ENCODE measurements at regions of chr5 and their contacts with region 1.

Region 1: DNA sequence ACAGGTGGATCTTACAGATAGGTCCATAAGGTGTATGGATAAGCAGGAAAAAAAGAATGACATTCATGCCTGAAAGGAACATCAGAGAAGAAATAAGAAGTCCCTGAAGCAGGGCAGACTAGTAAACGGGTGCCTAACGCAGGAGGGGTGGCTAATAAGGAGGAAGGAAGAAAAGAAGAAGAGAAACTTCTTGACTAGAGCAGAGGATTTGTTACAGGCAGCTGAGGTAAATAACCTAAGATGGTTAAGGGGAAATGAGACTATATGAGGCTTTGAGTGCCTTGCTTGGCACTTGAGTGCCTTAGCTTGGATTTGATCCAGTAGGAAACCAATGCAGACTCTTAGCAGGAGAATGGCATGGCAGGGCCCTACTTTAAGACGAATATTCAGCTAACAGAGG is 313.5 kb upstream of the PDE4D start:
- DNase-seq: no peak
- ATAC-seq: no peak
- H3K4me3 ChIP-seq: no peak overlapping the region
- H3K27ac ChIP-seq: peak overlapping the region; percentile 2
- H3K4me1 ChIP-seq: peaks cover 34% of the 10 kb centered on the region
- H3K27me3 ChIP-seq: no peaks in the 10 kb centered on the region
- CTCF ChIP-seq: no peak
- EP300 ChIP-seq: no peak
- POLR2A ChIP-seq: no peak
- RAD21 ChIP-seq: no peak

Region 2: DNA sequence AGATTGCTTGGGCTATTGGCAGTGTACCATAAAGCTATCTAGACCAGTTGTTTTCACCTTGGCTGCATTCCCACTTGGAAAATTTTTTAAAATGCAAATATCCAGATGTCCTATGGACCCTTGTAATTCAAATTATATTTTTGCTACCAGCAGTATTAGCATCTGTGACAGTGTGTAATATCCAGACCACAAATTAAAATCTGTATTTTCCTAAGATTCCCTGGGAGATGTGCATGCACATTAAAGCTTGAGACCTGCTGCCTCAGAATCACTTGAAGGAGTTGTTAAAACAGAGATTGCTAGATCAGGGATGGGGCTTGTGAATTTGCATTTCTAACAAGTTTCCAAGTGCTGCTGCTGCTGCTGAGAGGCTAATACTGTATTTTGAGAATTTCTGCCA is 67.7 kb after region 1 on chr5:
- CTCF ChIA-PET with region 1: no interaction called
- POLR2A ChIA-PET with region 1: no interaction called
- in situ Hi-C with region 1: no loop called
- intact Hi-C with region 1: loop called (anchors 5 kb)
- DNase-seq: no peak
- ATAC-seq: no peak
- H3K4me3 ChIP-seq: no peak overlapping the region
- H3K27ac ChIP-seq: no peak overlapping the region
- H3K4me1 ChIP-seq: peaks cover 20% of the 10 kb centered on the region
- H3K27me3 ChIP-seq: no peaks in the 10 kb centered on the region
- CTCF ChIP-seq: no peak
- EP300 ChIP-seq: no peak
- POLR2A ChIP-seq: no peak
- RAD21 ChIP-seq: no peak

Region 3: DNA sequence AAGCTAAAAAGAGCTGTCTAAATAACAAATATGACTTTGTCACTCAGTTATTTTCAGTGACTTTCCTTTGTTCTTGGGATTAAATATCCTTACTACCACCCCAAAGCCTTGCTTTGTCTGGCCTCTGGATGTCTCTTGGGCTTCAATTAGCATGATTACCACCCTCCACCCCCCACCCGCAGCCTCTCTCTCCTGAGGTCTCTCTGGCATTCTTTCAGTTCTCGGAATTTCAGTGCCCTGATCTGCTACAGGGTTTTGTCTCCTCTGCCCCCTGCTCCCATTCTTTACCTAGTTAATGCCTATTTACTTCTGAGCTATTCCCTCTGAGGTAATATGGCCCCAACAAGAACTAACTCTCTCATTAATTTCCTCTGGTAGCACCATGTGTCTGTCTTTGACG is 116.6 kb after region 1 on chr5:
- CTCF ChIA-PET with region 1: no interaction called
- POLR2A ChIA-PET with region 1: no interaction called
- in situ Hi-C with region 1: no loop called
- intact Hi-C with region 1: no loop called
- DNase-seq: no peak
- ATAC-seq: no peak
- H3K4me3 ChIP-seq: no peak overlapping the region
- H3K27ac ChIP-seq: no peak overlapping the region
- H3K4me1 ChIP-seq: no peaks in the 10 kb centered on the region
- H3K27me3 ChIP-seq: no peaks in the 10 kb centered on the region
- CTCF ChIP-seq: no peak
- EP300 ChIP-seq: no peak
- POLR2A ChIP-seq: no peak
- RAD21 ChIP-seq: no peak

Region 4: DNA sequence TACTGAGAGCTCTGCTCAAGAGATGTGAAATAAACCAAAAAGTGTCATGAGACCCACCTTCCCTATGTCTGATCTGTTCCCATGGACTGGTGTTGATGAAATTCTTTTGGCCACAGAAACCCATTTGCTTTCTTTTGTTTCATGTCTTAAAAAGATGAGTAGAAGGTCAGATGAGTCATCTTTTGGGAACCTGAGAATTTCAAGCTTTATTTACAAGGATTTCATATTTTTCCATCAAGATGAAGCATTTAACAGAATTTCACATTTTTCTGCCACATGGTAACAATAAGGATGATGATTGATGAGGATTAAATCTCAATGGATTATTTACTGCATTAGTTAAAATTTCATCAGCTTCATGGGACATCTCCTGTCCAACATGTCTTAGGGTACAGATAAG is 155.1 kb after region 1 on chr5:
- CTCF ChIA-PET with region 1: no interaction called
- POLR2A ChIA-PET with region 1: no interaction called
- in situ Hi-C with region 1: no loop called
- intact Hi-C with region 1: loop called (anchors 5 kb)
- DNase-seq: peak; percentile 4
- ATAC-seq: no peak
- H3K4me3 ChIP-seq: no peak overlapping the region
- H3K27ac ChIP-seq: no peak overlapping the region
- H3K4me1 ChIP-seq: peaks cover 7% of the 10 kb centered on the region; the same call in 1 of the 2 replicates
- H3K27me3 ChIP-seq: no peaks in the 10 kb centered on the region
- CTCF ChIP-seq: no peak
- EP300 ChIP-seq: no peak
- POLR2A ChIP-seq: no peak
- RAD21 ChIP-seq: no peak

Region 5: DNA sequence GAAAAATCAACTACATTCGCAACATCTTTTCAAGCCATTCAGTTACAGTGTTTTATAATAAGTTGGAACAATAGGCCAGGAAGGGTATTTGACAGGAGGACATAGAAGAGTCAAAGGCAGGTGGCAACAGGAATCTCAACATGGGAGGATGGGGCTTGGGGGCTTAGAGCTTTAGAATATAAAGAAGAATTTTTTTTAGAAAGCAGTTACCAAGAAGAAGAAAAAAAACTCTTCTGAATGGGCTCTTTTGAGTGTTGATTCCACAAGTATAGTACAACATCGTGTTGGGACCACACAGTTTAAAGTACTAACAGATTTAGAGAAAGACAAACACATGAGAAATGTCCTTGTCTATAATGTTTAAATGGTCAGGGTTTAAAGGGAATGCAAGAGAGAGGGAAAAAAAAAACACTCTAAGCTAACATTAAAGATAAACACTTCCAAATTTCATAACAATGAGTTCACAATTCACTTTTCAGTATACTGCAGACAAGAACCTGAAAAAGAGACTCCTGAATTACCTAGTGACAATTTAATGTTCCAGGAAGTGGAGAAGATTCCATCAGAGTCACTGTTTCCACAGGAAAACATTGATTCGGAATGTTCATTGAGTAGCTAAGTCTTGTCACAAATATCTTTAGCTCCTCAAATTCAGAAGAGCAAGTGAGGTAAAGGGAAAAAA is 210.6 kb after region 1 on chr5:
- CTCF ChIA-PET with region 1: no interaction called
- POLR2A ChIA-PET with region 1: no interaction called
- in situ Hi-C with region 1: no loop called
- intact Hi-C with region 1: no loop called
- DNase-seq: peak; percentile 97
- ATAC-seq: peak; percentile 99
- H3K4me3 ChIP-seq: peak overlapping the region in 1 of 3 experiments; percentile 14; a peak in 1 of 6 replicates
- H3K27ac ChIP-seq: peak overlapping the region; percentile 92
- H3K4me1 ChIP-seq: peaks cover 56% of the 10 kb centered on the region
- H3K27me3 ChIP-seq: no peaks in the 10 kb centered on the region
- CTCF ChIP-seq: no peak
- EP300 ChIP-seq: peak in 1 of 2 experiments; percentile 92; a peak in 2 of 4 replicates
- POLR2A ChIP-seq: no peak
- RAD21 ChIP-seq: no peak

Measured in HepG2 (cell line).